Activated naive CD4-positive, alpha-beta T cell treated with anti-CD3 and anti-CD28 coated beads for 36 hours (primary cell): ENCODE measurements at regions of chr1 and their contacts with region 1.

Region 1: GRCh38 chr1:97920832-97921571 is at the start of gene DPYD:
- DNase-seq: peak; percentile 87
- H3K4me3 Mint-ChIP-seq: peak within 1 kb of the TSS; percentile 93
- H3K27ac Mint-ChIP-seq: peak within 1 kb of the TSS; percentile 90
- H3K4me1 Mint-ChIP-seq: peaks cover 37% of the 10 kb centered on the region
- H3K27me3 Mint-ChIP-seq: no peaks in the 10 kb centered on the region
- total RNA-seq, gene DPYD: 9.8 to 11.1 TPM

Region 2: DNA sequence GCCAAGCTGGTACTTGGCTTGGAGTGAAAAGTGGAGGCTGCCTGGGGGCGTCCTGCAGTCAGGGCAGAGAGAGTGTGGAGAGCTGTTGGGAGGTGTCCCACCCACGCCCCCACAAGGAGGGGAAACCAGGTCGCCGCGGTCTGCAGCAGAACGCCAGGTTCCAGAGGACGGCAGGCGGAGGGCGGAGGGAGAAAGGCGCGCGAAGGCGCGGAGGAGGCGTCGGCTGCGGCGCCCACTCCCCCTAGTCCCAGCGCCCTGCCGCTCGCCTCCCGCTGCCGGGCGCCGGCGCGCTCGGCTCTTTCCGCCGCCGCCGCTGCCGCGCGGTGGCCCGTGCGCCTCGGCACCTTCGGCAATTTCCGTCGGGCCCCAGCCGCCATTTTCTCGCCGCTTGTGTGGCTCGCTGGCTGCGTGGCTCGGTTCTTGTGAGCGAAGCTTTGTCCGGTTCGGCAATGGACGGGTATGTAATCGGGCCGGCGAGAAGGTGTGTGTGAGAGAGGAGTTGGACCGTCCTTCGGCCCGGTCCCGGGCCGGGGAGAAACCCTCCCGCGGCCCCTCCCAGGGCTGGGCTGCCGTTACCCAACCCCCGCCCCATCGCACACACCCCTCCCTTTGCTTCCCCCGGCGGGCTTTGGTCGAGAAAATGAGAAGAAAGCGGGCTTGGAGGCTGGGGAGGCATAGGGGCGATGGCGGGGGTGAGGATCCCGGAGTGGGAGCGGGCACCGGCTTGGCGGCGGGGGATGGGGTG is 1199.4 kb before region 1 on chr1 and contains the start of gene PTBP2:
- CTCF ChIA-PET with region 1: no interaction called
- intact Hi-C with region 1: loop called (anchors 2 kb)
- DNase-seq: peak; percentile 83
- H3K4me3 Mint-ChIP-seq: peak within 1 kb of the TSS; percentile 93
- H3K27ac Mint-ChIP-seq: peak within 1 kb of the TSS; percentile 92
- H3K4me1 Mint-ChIP-seq: peaks cover 23% of the 10 kb centered on the region
- H3K27me3 Mint-ChIP-seq: no peaks in the 10 kb centered on the region
- total RNA-seq, gene PTBP2: 12.6 to 13.1 TPM

Region 3: DNA sequence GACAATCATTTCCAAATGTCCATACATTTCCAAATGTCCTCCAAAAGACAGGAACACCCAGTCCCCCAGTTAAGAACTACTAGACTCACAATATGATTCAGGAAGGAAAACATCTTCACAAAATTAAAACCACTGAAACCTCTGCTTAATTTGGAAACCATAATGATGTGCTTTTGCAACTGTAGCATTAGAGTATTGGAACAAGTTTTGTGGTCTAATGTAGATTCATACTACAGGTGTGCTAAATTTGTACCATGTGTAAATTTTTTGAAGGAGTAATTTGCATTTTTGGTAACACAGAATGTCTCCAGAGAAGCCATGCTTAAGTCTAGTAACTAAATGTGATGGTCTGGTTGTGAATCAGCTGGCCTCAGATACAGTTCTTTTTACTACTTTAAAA is 129.8 kb before region 1 on chr1:
- CTCF ChIA-PET with region 1: interaction called, 3 read pairs
- intact Hi-C with region 1: loop called (anchors 1 kb)
- DNase-seq: no peak
- H3K4me3 Mint-ChIP-seq: no peak overlapping the region
- H3K27ac Mint-ChIP-seq: peak overlapping the region; percentile 8
- H3K4me1 Mint-ChIP-seq: peaks cover 35% of the 10 kb centered on the region
- H3K27me3 Mint-ChIP-seq: no peaks in the 10 kb centered on the region

Region 4: GRCh38 chr1:97849345-97850340 is 71.4 kb before region 1 on chr1:
- CTCF ChIA-PET with region 1: no interaction called
- intact Hi-C with region 1: loop called (anchors 2 kb)
- DNase-seq: no peak
- H3K4me3 Mint-ChIP-seq: peak overlapping the region; percentile 12
- H3K27ac Mint-ChIP-seq: no peak overlapping the region
- H3K4me1 Mint-ChIP-seq: peaks cover 24% of the 10 kb centered on the region
- H3K27me3 Mint-ChIP-seq: no peaks in the 10 kb centered on the region

Region 5: DNA sequence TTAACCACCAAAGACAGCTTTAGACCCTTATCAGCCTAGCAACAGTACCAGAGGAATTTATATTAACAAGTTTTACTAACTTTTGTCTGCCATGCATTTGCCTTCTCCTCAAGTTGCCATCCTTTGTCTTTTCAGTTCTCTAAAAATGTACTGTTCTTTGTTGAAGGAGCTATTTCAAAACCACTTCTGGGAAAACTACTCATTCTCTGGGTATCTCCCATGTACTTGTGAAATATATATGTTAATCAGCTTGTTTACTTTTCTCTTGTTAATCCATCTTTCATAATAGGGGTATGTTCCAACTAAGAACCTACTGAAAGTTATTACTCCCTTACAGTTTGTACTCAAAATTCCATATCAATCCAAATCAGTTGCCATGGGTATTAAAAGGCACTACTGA is 16.5 kb before region 1 on chr1:
- CTCF ChIA-PET with region 1: interaction called, 4 read pairs
- intact Hi-C with region 1: loop called (anchors 1 kb)
- DNase-seq: no peak
- H3K4me3 Mint-ChIP-seq: no peak overlapping the region
- H3K27ac Mint-ChIP-seq: peak overlapping the region; percentile 57
- H3K4me1 Mint-ChIP-seq: peaks cover 39% of the 10 kb centered on the region
- H3K27me3 Mint-ChIP-seq: no peaks in the 10 kb centered on the region

Region 6: DNA sequence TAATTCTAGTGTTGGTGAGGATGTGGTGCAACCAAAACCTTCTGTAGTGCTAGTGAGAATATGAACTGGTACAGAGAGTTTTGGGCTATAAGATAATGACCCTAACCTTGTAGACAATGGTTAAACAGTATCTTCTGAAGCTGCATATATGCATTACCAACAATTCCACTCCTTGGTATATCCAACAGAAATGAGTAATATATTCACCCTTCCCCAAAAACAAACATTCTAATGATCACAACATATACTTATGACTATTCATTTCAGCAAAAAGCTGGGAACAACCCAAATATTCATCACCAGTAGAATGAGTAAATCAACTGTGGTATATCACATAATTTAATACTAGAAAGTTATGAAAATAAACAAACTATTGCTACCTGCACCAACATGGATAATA is 39.5 kb after region 1 on chr1:
- CTCF ChIA-PET with region 1: no interaction called
- intact Hi-C with region 1: no loop called
- DNase-seq: no peak
- H3K4me3 Mint-ChIP-seq: no peak overlapping the region
- H3K27ac Mint-ChIP-seq: no peak overlapping the region
- H3K4me1 Mint-ChIP-seq: no peaks in the 10 kb centered on the region
- H3K27me3 Mint-ChIP-seq: no peaks in the 10 kb centered on the region

Region 7: GRCh38 chr1:98048244-98048643 is 127.2 kb after region 1 on chr1:
- CTCF ChIA-PET with region 1: interaction called, 3 read pairs
- intact Hi-C with region 1: loop called (anchors 1 kb)
- DNase-seq: peak; percentile 89
- H3K4me3 Mint-ChIP-seq: peak overlapping the region; percentile 54
- H3K27ac Mint-ChIP-seq: no peak overlapping the region
- H3K4me1 Mint-ChIP-seq: peaks cover 38% of the 10 kb centered on the region
- H3K27me3 Mint-ChIP-seq: peaks cover 62% of the 10 kb centered on the region